Ascending aorta (tissue), 2 donors: ENCODE measurements at regions of chr15 and their contacts with region 1.

Region 1: GRCh38 chr15:89087830-89088604 is at the start of gene ABHD2:
- DNase-seq: peak; percentile 99 to 100
- H3K4me3 ChIP-seq: peak within 1 kb of the TSS; percentile 79 to 83
- H3K27ac ChIP-seq: peak within 1 kb of the TSS; percentile 96 to 98
- H3K4me1 ChIP-seq: peaks cover 6 to 28% of the 10 kb centered on the region in 2 donors
- H3K27me3 ChIP-seq: no peaks in the 10 kb centered on the region
- CTCF ChIP-seq: no peak
- total RNA-seq, gene ABHD2: 228 TPM

Region 2: GRCh38 chr15:89017370-89018066 is 70.5 kb before region 1 on chr15:
- intact Hi-C with region 1: loop called (anchors 5 kb)
- DNase-seq: peak; percentile 55 to 96
- H3K4me3 ChIP-seq: peak overlapping the region; percentile 36 to 40
- H3K27ac ChIP-seq: peak overlapping the region; percentile 95 to 96
- H3K4me1 ChIP-seq: peaks cover 22 to 51% of the 10 kb centered on the region in 2 donors
- H3K27me3 ChIP-seq: no peaks in the 10 kb centered on the region
- CTCF ChIP-seq: peak; percentile 76 to 82 (median 79)

Region 3: GRCh38 chr15:89101302-89102191 is 13.5 kb after region 1 on chr15:
- intact Hi-C with region 1: loop called (anchors 1 kb)
- DNase-seq: peak; percentile 73 to 96
- H3K4me3 ChIP-seq: no peak overlapping the region
- H3K27ac ChIP-seq: peak overlapping the region; percentile 96 to 98
- H3K4me1 ChIP-seq: peaks cover 24 to 89% of the 10 kb centered on the region in 2 donors
- H3K27me3 ChIP-seq: no peaks in the 10 kb centered on the region
- CTCF ChIP-seq: no peak

Region 4: DNA sequence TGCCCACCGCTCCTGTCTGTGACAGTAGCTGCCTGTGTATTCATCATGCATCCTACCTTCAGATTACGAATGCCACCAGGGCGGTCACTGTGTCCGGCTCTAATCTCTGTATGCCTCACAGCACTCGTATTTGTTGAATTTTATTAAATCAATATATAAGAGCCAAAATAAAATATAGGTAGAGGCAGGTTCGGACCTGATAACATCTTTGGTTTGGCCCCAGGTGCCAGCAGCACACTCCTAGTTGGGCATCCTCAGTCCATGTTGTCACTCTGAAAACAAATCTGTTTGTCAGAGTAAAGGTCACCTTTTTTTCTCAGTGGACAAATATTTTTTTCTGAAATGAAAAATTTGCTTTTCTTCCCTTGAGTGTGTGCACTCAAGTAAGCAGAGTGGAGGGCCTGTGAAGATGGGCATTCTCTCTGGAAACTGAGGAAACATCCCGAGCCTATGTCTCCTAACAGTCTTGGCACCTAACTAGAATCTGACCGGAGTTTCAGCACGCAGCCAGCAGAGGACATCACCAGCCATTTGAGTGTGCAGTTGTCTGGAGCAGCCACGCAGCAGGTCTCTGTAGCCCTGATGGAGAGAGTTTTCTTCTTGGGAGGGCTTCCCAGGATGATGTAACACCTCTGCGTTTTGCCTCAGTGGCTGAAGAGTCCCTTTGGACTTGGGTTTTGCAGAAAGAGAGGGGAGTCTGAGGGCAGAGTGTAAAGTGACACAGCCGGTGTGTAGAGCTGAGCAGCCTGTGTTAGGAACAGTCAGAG is 51.6 kb after region 1 on chr15:
- intact Hi-C with region 1: loop called (anchors 2 kb)
- DNase-seq: no peak
- H3K4me3 ChIP-seq: no peak overlapping the region
- H3K27ac ChIP-seq: peak overlapping the region; percentile 92 to 96
- H3K4me1 ChIP-seq: peaks cover 57 to 84% of the 10 kb centered on the region in 2 donors
- H3K27me3 ChIP-seq: no peaks in the 10 kb centered on the region
- CTCF ChIP-seq: peak in 2 of 3 experiments; percentile 9 to 10

Region 5: DNA sequence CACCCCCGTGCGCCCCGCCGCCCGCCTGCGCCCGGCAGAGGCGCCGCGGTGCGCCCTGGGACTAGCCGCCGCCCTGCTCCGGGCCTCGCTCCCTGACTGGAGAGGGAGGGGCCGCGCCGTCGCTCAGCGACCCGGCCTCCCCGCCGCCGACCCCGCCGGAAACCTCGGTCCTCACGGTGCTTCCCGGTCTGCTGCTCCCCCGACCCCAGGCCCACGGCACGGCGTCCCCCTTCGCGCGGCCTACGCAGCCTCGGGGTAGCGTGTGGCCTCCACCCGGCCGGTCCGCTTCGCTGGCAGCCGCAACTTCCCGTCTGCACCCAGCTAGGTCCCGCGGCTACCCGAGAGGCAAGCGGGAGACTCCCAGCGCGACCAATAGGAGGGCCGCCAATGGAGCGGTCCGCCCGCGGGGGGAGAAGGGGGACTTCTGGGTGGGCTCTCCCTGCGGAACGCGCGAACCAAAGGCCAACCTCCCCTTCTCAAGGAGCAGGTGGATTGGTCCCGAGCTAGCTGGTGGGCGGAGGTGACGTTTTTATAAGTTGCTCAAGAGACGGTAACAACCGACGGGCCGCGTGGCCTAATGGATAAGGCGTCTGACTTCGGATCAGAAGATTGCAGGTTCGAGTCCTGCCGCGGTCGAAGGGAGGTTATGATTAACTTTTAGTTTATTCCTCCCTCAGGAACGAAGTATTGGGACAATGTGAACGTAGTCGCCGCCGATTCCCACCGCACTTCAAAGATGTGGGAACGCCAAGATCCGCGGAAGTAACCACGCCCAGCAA is 246.7 kb after region 1 on chr15 and contains the start of gene POLG:
- intact Hi-C with region 1: no loop called
- DNase-seq: peak; percentile 96 to 99
- H3K4me3 ChIP-seq: peak within 1 kb of the TSS; percentile 76 to 96
- H3K27ac ChIP-seq: peak within 1 kb of the TSS; percentile 88 to 93
- H3K4me1 ChIP-seq: peaks cover 14 to 38% of the 10 kb centered on the region in 2 donors
- H3K27me3 ChIP-seq: no peaks in the 10 kb centered on the region
- CTCF ChIP-seq: no peak
- total RNA-seq, gene POLG: 69.1 TPM